Mammary epithelial cell (primary cell): ENCODE measurements at regions of chr16 and their contacts with region 1.

Region 1: GRCh38 chr16:17287166-17287800 is 183.5 kb downstream of the XYLT1 start:
- DNase-seq: no peak
- H3K4me3 ChIP-seq: no peak overlapping the region
- H3K27ac ChIP-seq: no peak overlapping the region
- H3K4me1 ChIP-seq: no peaks in the 10 kb centered on the region
- H3K27me3 ChIP-seq: no peaks in the 10 kb centered on the region
- CTCF ChIP-seq: no peak

Region 2: GRCh38 chr16:17194190-17194780 is 93.0 kb before region 1 on chr16:
- CTCF ChIA-PET with region 1: no interaction called
- dilution Hi-C with region 1: loop called (anchors 5 kb)
- in situ Hi-C with region 1: no loop called
- intact Hi-C with region 1: no loop called
- DNase-seq: no peak
- H3K4me3 ChIP-seq: no peak overlapping the region
- H3K27ac ChIP-seq: no peak overlapping the region
- H3K4me1 ChIP-seq: no peaks in the 10 kb centered on the region
- H3K27me3 ChIP-seq: no peaks in the 10 kb centered on the region
- CTCF ChIP-seq: peak; percentile 40 to 72

Region 3: GRCh38 chr16:17230932-17231581 is 56.2 kb before region 1 on chr16:
- CTCF ChIA-PET with region 1: no interaction called
- dilution Hi-C with region 1: loop called (anchors 5 kb)
- in situ Hi-C with region 1: no loop called
- intact Hi-C with region 1: no loop called
- DNase-seq: no peak
- H3K4me3 ChIP-seq: no peak overlapping the region
- H3K27ac ChIP-seq: no peak overlapping the region
- H3K4me1 ChIP-seq: peaks cover 14% of the 10 kb centered on the region
- H3K27me3 ChIP-seq: no peaks in the 10 kb centered on the region
- CTCF ChIP-seq: peak in 1 of 2 donors; percentile 2

Region 4: DNA sequence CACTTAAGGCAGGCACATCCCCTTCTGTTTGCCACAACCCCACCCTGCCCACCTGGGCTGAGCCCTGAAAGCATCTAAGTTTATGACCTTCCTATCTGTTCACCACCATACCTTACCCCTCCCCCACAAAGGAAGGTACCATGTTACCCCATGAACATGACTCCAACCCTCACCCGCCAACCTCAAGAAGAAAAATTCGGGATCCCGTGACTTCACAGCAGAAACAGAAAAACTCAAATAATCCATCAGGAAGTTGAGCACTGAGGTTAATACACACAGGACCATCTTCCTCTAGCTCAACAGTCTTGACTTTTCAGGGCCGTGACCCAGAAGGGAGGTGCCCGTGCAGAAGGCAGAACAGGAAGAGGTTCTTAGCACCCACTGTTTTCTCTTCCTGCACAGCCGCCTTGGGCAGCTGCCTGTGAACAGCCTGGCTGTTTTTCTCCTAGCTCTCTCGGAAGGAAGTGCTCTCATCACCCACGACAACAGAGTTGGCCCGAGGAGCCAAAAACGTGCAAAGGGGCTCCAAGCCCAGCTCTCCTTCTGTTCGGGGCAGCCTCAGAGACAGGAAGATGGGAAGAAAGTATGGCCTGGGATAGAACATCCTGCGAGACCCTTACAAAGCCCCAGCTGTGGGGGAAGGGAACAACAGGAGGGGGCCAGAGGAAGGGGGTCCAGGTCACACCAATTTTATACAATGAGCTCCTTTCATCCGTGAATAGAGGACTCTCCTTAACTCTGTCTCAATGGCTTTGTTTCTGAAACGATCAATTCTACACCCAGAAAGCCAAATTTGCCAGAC is 82.3 kb after region 1 on chr16:
- CTCF ChIA-PET with region 1: no interaction called
- dilution Hi-C with region 1: no loop called
- in situ Hi-C with region 1: no loop called
- intact Hi-C with region 1: no loop called
- DNase-seq: no peak
- H3K4me3 ChIP-seq: no peak overlapping the region
- H3K27ac ChIP-seq: no peak overlapping the region
- H3K4me1 ChIP-seq: no peaks in the 10 kb centered on the region
- H3K27me3 ChIP-seq: no peaks in the 10 kb centered on the region
- CTCF ChIP-seq: no peak